ENCODE measurements at regions of chr5 and their contacts with region 1.

Region 1: GRCh38 chr5:80093796-80094195 is 58.6 kb downstream of the THBS4 start:
- DNase-seq: no peak

Region 2: DNA sequence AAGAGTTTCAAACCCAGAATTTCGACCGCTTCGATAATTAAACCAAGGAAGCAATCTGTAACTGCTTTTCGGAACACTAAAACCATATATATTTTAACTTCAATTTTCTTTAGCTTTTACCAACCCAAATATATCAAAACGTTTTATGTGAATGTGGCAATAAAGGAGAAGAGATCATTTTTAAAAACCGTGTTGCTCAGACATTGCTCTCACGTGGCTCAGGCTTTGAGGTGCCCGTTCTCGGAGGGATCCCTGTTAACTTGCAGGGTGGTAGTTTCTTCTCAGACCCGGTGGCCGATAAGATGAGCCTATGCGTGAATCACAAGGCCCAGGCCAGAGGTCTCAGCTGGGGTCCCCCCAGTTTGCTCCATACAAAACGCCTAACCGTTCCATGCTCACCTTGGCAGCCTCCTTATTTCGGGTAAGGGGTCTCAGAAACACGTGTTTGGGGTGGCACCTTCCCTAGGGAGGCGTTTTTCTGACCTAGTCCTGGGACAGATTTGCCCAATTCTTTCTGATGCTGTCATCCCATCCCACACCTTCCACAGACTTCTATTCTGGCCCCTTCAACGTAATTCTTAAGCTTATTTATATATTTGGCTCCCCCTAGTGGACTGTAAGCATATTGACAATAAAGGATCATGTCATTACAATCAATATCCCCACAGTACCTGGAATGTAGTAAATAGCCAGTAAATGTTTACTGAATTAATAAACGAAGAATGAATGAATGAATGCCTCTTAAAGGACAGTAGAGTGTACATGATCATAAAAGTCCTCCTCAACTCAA is 10.5 kb before region 1 on chr5:
- CTCF ChIA-PET with region 1: interaction called, 12 read pairs
- POLR2A ChIA-PET with region 1: no interaction called
- DNase-seq: peak; percentile 54

Region 3: DNA sequence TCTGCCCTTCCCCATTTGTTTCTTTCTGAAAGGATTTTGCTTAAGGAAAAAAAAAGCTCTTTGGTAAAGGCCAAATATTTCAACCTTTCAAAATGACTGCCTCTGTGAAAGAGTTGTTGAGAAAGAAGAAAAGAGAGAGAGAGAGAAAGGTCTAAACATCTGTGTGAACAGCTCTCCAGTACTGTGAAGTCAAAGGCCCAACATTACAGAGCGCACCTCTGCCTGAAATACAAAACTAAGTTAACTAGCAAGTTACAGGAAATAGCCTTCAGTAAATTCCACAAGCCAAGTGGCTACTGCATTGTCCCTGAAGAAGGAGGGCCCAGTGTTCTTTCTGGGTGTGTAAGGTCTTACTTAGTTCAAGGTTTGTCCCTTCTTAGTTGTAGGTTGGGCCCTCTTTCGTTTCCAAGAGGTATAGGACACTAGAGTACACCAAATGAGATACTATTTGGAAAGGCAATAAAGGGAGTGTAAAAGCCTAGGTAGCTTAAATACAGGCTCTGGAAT is 45.7 kb after region 1 on chr5:
- CTCF ChIA-PET with region 1: no interaction called
- POLR2A ChIA-PET with region 1: no interaction called
- DNase-seq: no peak

Region 4: DNA sequence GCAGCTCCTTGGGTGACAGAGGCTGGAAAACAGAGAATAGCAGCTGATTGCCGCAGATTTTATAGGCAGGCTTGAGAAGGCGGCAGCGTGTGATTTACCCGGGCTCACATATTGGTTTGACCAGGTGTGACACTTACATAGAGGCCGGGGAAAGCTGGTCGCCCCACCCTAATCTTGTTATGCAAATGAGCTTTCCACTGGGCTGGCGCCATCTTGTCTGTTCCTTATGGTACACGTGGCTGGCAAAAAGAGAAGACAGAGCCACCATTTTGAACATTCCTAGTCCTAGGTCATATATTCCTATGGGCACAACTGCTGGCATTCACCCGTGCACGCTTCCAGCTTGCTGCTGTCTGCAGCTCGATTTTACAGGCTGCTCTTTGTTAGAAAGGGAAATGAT is 214.7 kb after region 1 on chr5:
- CTCF ChIA-PET with region 1: interaction called, 48 read pairs
- POLR2A ChIA-PET with region 1: no interaction called
- DNase-seq: no peak